Activated CD4-positive, alpha-beta T cell treated with anti-CD3 and anti-CD28 coated beads, Interleukin-2, amount 10 ng/mL, durations not matched to agents 7 days and 5 days (primary cell): ENCODE measurements at regions of chr22 and their contacts with region 1.

Region 1: GRCh38 chr22:36454916-36455570 is 26.4 kb downstream of the TXN2 start:
- DNase-seq: peak; percentile 96
- H3K4me3 Mint-ChIP-seq: peak overlapping the region; percentile 75
- H3K27ac Mint-ChIP-seq: peak overlapping the region; percentile 90
- H3K4me1 Mint-ChIP-seq: peaks cover 59% of the 10 kb centered on the region
- H3K27me3 Mint-ChIP-seq: no peaks in the 10 kb centered on the region

Region 2: DNA sequence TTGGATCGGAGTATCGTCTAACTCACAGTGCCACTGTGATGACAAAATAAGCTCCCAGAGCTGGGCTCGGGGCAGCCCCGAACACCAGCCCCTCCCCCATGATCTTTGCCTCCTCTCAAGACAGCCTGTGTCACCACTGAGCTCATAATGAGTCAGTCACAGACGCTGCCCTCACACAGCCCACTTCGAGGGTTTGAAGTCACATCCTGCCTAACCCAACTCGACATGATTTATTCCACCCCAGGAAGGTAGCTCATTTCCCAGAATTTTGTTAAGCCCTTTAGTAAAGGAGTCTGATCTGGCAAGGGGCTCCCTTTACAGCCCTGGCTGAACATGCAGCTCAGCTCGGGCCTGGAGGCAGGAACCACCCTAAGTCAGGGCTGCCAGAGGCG is 90.0 kb before region 1 on chr22:
- CTCF ChIA-PET with region 1: interaction called, 10 read pairs
- POLR2A ChIA-PET with region 1: interaction called, 3 read pairs
- DNase-seq: peak; percentile 90
- H3K4me3 Mint-ChIP-seq: peak overlapping the region; percentile 49
- H3K27ac Mint-ChIP-seq: peak overlapping the region; percentile 90
- H3K4me1 Mint-ChIP-seq: peaks cover 94% of the 10 kb centered on the region
- H3K27me3 Mint-ChIP-seq: no peaks in the 10 kb centered on the region